Dorsolateral prefrontal cortex (tissue), 120 donors: ENCODE measurements at regions of chr2 and their contacts with region 1.

Region 1: GRCh38 chr2:50374711-50375110 is 657.2 kb downstream of the NRXN1 start:
- DNase-seq: no peak
- H3K4me3 ChIP-seq: no peak overlapping the region
- H3K27ac ChIP-seq: no peak overlapping the region
- H3K27me3 ChIP-seq: no peaks in the 10 kb centered on the region
- CTCF ChIP-seq: no peak

Region 2: GRCh38 chr2:50255931-50256330 is 118.8 kb before region 1 on chr2:
- intact Hi-C with region 1: no loop called
- DNase-seq: no peak
- H3K4me3 ChIP-seq: no peak overlapping the region
- H3K27ac ChIP-seq: no peak overlapping the region
- H3K27me3 ChIP-seq: no peaks in the 10 kb centered on the region
- CTCF ChIP-seq: no peak

Region 3: GRCh38 chr2:50391556-50391955 is 16.8 kb after region 1 on chr2:
- intact Hi-C with region 1: loop called in 1 of 2 experiments (anchors 2 kb)
- DNase-seq: no peak
- H3K4me3 ChIP-seq: no peak overlapping the region
- H3K27ac ChIP-seq: no peak overlapping the region
- H3K27me3 ChIP-seq: no peaks in the 10 kb centered on the region
- CTCF ChIP-seq: no peak

Region 4: GRCh38 chr2:50449306-50449705 is 74.6 kb after region 1 on chr2:
- intact Hi-C with region 1: no loop called
- DNase-seq: no peak
- H3K4me3 ChIP-seq: no peak overlapping the region
- H3K27ac ChIP-seq: peak overlapping the region in 1 of 59 donors; percentile 41
- H3K27me3 ChIP-seq: no peaks in the 10 kb centered on the region
- CTCF ChIP-seq: no peak

Region 5: DNA sequence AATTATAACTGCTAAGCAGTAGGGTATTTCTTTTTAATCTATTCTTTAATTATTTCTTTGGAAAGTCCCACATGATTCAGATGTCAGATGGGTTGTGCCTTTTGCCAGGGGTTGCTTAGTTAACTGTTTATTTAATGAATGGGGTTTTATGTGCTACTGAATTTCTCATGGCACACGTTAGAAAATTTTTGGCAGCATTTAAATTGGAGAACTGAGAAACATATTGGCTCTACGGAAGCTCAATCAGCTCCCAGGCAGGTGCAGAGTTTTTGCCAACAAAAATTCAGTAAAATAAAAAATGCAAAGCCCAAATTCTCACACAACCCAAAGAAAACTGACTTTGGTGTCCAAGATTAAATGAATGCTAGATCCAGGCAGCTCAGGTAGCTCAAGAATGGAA is 190.1 kb after region 1 on chr2:
- intact Hi-C with region 1: no loop called
- DNase-seq: peak in 1 of 10 donors; percentile 15
- H3K4me3 ChIP-seq: no peak overlapping the region
- H3K27ac ChIP-seq: peak overlapping the region in 3 of 59 donors; percentile 8 to 44 (median 24)
- H3K27me3 ChIP-seq: no peaks in the 10 kb centered on the region
- CTCF ChIP-seq: no peak